Natural killer cell (primary cell): ENCODE measurements at regions of chr17 and their contacts with region 1.

Region 1: GRCh38 chr17:41665566-41666236 is 23.0 kb upstream of the EIF1 start:
- DNase-seq: peak; percentile 92 to 94
- ATAC-seq: peak; percentile 75 to 90 (median 81)
- H3K4me3 ChIP-seq: peak overlapping the region; percentile 52
- H3K4me3 Mint-ChIP-seq: peak overlapping the region; percentile 96
- H3K27ac ChIP-seq: peak overlapping the region; percentile 96
- H3K27ac Mint-ChIP-seq: peak overlapping the region; percentile 96 to 99
- H3K4me1 ChIP-seq: peaks cover 23% of the 10 kb centered on the region
- H3K4me1 Mint-ChIP-seq: peaks cover 18 to 27% of the 10 kb centered on the region in 2 donors
- H3K27me3 ChIP-seq: no peaks in the 10 kb centered on the region
- H3K27me3 Mint-ChIP-seq: no peaks in the 10 kb centered on the region
- CTCF ChIP-seq: peak; percentile 95

Region 2: GRCh38 chr17:40803617-40804082 is 862.1 kb before region 1 on chr17:
- intact Hi-C with region 1: loop called (anchors 1 kb)
- DNase-seq: peak; percentile 56 to 85
- ATAC-seq: peak; percentile 82 to 92 (median 87)
- H3K4me3 ChIP-seq: no peak overlapping the region
- H3K4me3 Mint-ChIP-seq: no peak overlapping the region
- H3K27ac ChIP-seq: no peak overlapping the region
- H3K27ac Mint-ChIP-seq: no peak overlapping the region
- H3K4me1 ChIP-seq: no peaks in the 10 kb centered on the region
- H3K4me1 Mint-ChIP-seq: no peaks in the 10 kb centered on the region
- H3K27me3 ChIP-seq: peaks cover 15% of the 10 kb centered on the region
- H3K27me3 Mint-ChIP-seq: peaks cover 29 to 52% of the 10 kb centered on the region in 2 donors
- CTCF ChIP-seq: peak; percentile 91

Region 3: DNA sequence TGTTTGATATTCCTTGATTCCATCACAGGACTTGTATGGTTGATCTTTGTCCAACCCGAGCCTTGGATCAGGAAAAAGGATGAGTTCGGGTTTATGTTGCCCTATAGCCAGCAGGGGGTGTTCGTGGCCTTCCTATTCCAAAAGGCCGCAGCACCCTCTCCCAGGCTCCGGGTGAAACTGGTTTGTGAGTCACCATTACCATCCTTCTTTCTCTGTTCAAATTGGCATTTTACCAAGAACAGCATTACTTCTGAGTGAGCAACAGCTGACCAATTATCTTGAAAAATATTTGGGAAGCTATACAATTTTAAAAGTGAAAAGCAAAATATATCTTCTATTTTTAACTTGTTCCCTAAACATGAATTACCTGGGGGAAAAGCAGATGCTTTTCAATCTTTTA is 756.4 kb before region 1 on chr17:
- intact Hi-C with region 1: loop called (anchors 1 kb)
- DNase-seq: peak; percentile 23 to 84
- ATAC-seq: peak; percentile 63 to 81 (median 72)
- H3K4me3 ChIP-seq: no peak overlapping the region
- H3K4me3 Mint-ChIP-seq: no peak overlapping the region
- H3K27ac ChIP-seq: no peak overlapping the region
- H3K27ac Mint-ChIP-seq: no peak overlapping the region
- H3K4me1 ChIP-seq: no peaks in the 10 kb centered on the region
- H3K4me1 Mint-ChIP-seq: no peaks in the 10 kb centered on the region
- H3K27me3 ChIP-seq: peaks cover 12% of the 10 kb centered on the region
- H3K27me3 Mint-ChIP-seq: peaks cover 34 to 60% of the 10 kb centered on the region in 2 donors
- CTCF ChIP-seq: peak; percentile 57

Region 4: DNA sequence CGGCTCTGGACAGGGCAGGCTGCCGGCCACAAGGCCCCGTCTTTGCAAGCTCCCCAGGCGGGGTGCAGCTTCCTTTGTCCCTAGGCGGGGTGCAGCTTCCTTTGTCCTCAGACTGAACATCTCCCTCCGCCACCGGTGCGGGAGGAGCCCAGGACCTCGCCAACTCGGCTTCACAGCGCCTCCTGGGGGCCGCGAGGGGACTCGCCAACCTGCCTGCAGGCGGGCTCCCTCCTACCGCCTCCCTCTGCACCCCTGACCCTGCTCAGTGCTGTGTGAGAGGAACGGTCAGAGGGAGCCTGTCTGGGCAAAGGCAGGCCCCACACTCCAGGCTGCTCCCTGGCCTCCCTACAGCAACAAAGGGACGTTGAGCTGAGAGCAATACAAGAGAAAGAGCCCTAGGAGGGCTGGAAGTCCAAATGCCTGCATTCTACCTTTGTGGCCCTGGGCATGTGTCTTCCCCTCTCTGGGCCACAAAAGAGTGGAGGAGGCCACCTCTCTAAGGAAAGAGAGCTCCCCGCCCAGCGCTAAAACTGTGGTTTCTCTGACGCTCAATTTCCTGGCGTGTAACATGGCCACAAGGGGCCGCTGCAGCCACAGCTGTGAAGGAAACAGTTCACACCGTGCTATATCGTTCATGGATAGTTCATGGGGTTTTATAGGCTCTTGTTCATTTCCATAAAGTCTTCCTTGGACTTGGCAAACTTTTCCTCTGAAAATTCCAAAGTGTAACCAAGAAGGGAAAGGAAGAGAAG is 116.7 kb before region 1 on chr17:
- intact Hi-C with region 1: loop called (anchors 1 kb)
- DNase-seq: peak; percentile 83 to 91
- ATAC-seq: peak; percentile 91 to 95 (median 92)
- H3K4me3 ChIP-seq: no peak overlapping the region
- H3K4me3 Mint-ChIP-seq: peak overlapping the region; percentile 69
- H3K27ac ChIP-seq: peak overlapping the region; percentile 47
- H3K27ac Mint-ChIP-seq: peak overlapping the region; percentile 58 to 65
- H3K4me1 ChIP-seq: peaks cover 17% of the 10 kb centered on the region
- H3K4me1 Mint-ChIP-seq: peaks cover 9 to 23% of the 10 kb centered on the region in 2 donors
- H3K27me3 ChIP-seq: no peaks in the 10 kb centered on the region
- H3K27me3 Mint-ChIP-seq: peaks cover 17 to 20% of the 10 kb centered on the region in 2 donors
- CTCF ChIP-seq: peak; percentile 87

Region 5: DNA sequence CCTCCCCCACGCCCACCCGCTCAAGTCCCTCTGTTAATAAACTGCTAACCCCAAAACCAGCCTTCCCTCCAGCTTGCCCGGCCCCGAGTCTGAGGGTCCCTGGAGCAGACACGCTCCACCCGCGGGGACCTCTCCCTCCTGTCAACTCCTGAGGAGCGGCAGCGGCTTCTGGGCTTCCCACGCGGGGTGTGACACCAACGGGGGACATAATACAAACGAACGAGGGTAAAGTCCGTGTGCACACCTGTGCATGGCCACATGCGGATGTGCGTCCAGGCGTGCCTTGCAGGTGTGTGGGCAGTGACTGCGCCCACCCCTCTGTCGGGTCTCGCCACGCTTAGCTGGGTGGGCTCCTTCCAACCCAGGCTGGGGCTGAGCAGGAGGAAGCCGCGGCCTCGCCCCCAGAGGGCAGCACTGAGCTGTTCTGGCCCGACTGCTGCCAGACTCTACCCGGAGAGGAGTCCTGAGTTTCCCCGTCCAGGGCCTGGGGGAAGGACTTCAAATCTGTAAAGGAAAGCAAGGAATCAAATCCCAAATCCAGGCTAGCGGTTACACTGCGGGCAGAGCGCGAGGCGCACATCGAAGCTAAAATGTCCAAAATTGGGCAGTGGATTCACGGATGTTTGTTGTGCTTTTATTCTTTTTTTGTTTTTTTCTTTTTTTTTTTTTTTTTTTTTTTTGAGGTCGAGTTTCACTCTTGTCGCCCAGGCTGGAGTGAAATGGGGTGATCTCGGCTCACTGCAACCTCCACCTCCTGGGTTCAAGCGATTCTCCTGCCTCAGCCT is 17.1 kb before region 1 on chr17:
- intact Hi-C with region 1: loop called (anchors 1 kb)
- DNase-seq: peak; percentile 81 to 91
- ATAC-seq: peak; percentile 91 to 93 (median 92)
- H3K4me3 ChIP-seq: peak overlapping the region; percentile 30
- H3K4me3 Mint-ChIP-seq: peak overlapping the region; percentile 73
- H3K27ac ChIP-seq: no peak overlapping the region
- H3K27ac Mint-ChIP-seq: peak overlapping the region in 1 of 2 donors; percentile 41
- H3K4me1 ChIP-seq: peaks cover 14% of the 10 kb centered on the region
- H3K4me1 Mint-ChIP-seq: peaks cover 9 to 10% of the 10 kb centered on the region in 2 donors
- H3K27me3 ChIP-seq: no peaks in the 10 kb centered on the region
- H3K27me3 Mint-ChIP-seq: peaks cover 0 to 4% of the 10 kb centered on the region in 2 donors
- CTCF ChIP-seq: peak; percentile 70

Region 6: GRCh38 chr17:41678907-41679739 is 13.4 kb after region 1 on chr17:
- intact Hi-C with region 1: loop called (anchors 1 kb)
- DNase-seq: peak; percentile 35 to 86
- ATAC-seq: peak; percentile 86 to 91 (median 88)
- H3K4me3 ChIP-seq: peak overlapping the region; percentile 38
- H3K4me3 Mint-ChIP-seq: peak overlapping the region; percentile 88
- H3K27ac ChIP-seq: peak overlapping the region; percentile 88
- H3K27ac Mint-ChIP-seq: peak overlapping the region; percentile 92
- H3K4me1 ChIP-seq: peaks cover 25% of the 10 kb centered on the region
- H3K4me1 Mint-ChIP-seq: peaks cover 17 to 22% of the 10 kb centered on the region in 2 donors
- H3K27me3 ChIP-seq: no peaks in the 10 kb centered on the region
- H3K27me3 Mint-ChIP-seq: no peaks in the 10 kb centered on the region
- CTCF ChIP-seq: no peak

Region 7: DNA sequence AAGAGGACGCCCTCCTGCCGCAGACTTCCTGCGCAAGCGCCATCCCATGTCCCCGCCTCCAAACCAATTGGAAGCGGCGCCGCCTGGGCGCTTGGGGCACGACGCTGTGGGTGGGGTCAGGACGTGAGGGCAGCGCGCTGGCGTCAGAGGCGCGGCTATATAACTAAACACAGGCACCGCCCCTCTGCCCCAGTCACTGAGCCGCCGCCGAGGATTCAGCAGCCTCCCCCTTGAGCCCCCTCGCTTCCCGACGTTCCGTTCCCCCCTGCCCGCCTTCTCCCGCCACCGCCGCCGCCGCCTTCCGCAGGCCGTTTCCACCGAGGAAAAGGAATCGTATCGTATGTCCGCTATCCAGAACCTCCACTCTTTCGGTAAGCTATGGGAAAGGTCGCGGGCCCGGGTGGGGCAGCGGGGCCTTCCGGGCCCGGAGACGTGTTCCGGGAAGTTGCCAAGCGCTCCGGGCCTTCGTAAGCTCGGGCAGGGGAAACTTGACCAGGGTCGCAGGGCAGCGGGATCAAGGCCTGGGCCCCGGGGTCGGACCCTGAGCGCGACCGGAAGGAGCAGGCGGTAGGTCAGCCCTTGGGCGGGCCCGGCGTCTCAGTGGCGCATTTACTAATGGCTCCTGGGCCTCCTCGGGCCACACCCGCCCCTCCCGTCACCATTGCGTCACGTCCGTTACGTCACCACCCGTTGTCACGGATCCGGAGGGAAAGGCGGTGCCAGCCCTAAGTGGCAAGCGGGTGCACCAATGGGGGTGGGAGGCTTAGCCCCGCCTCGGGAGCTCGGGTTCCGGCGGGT is 23.2 kb after region 1 on chr17 and contains the start of gene EIF1:
- intact Hi-C with region 1: loop called (anchors 1 kb)
- DNase-seq: peak; percentile 100
- ATAC-seq: peak; percentile 74 to 91 (median 79)
- H3K4me3 ChIP-seq: peak within 1 kb of the TSS; percentile 66
- H3K4me3 Mint-ChIP-seq: peak within 1 kb of the TSS; percentile 96
- H3K27ac ChIP-seq: peak within 1 kb of the TSS; percentile 90
- H3K27ac Mint-ChIP-seq: peak within 1 kb of the TSS; percentile 99 to 100
- H3K4me1 ChIP-seq: peaks cover 21% of the 10 kb centered on the region
- H3K4me1 Mint-ChIP-seq: peaks cover 47 to 50% of the 10 kb centered on the region in 2 donors
- H3K27me3 ChIP-seq: no peaks in the 10 kb centered on the region
- H3K27me3 Mint-ChIP-seq: no peaks in the 10 kb centered on the region
- CTCF ChIP-seq: no peak
- total RNA-seq, gene EIF1: 2,034 to 2,368 (median 2,279) TPM

Region 8: DNA sequence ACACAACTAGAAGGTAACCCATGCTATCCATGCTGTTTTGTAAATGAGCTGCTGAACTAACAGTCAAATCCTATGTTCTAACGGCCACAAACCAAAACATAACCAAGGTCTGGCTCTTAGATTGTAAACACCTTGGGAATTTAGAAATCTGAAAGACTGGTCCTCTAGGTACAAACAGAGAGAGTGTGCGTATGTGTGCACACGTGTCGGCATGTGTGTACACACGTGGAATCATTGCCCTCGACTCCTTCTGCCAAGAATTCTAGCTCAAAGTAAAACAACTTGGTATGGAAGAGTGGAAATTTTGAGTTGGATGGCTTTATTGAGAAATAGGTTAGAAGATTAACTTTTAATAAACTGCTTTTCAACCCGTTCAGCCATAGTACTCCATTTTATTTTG is 546.7 kb after region 1 on chr17:
- intact Hi-C with region 1: no loop called
- DNase-seq: no peak
- ATAC-seq: no peak
- H3K4me3 ChIP-seq: no peak overlapping the region
- H3K4me3 Mint-ChIP-seq: no peak overlapping the region
- H3K27ac ChIP-seq: no peak overlapping the region
- H3K27ac Mint-ChIP-seq: no peak overlapping the region
- H3K4me1 ChIP-seq: no peaks in the 10 kb centered on the region
- H3K4me1 Mint-ChIP-seq: no peaks in the 10 kb centered on the region
- H3K27me3 ChIP-seq: no peaks in the 10 kb centered on the region
- H3K27me3 Mint-ChIP-seq: no peaks in the 10 kb centered on the region
- CTCF ChIP-seq: no peak